ENCODE measurements at regions of chr7 and their contacts with region 1.

Region 1: GRCh38 chr7:121076350-121077164 is 88.0 kb downstream of the CPED1 start:
- DNase-seq: no peak

Region 2: DNA sequence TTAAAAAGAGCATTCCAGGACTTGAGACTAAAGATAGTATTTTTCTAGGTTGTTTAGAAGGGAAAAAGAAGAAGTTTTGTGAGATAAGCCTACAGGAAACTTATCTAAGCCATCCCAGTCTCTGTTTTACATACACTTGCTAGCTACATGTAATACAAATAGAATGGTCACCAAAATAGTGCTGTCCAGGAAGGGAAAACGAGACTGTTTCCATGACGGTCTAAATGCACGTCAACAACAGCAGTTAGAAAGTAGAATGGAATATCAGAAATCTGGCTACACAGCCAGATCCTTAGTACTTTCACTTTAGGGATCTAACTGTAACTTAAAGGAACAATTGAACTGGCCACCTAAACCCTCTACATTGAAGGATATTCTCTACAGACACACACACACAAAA is 336.2 kb before region 1 on chr7:
- in situ Hi-C with region 1: no loop called
- DNase-seq: no peak

Region 3: DNA sequence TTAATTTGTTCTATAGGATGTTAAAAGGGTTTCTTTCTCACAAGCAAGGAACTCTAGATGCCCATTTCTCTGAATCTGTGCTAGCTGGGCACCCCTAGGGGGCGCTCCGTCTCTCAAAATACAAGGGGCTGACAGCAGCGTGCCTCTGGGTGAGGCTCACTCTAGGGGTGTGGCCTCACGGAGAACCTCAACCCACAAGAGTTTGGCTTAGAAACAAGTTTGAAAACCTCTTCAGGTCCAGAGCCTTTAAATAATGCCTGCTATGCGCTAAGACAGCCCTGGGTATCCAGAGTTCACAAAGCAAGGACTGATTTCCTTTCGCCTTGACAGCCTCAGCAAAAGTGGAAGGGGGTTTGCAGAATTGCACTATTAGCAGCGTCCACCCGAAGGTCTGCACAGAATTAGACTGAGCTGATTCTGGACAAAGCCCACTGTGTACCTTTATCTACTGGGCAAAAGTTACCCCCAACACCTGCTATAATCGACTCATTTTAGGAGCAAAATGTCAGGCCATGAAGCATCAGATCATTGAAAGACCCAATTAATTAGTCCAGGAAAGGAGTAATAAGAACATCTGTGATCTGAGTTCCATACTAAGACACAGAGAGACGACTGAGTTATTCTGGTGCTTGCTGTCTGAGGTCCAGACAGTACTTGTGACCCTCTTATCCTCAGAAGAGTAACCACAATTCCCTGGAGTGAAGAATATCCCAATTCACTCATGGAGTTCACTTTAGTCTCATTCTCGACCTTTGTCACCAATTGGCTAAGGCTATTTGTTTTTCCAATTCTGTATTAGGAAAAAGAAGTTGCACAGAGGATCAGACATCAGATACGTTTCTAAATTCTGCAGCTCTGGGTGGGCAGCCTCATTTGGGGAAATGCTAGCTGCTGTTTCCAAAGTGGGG is 88.6 kb before region 1 on chr7:
- in situ Hi-C with region 1: loop called (anchors 10 kb)
- DNase-seq: peak; percentile 82